ENCODE measurements at regions of chr1 and their contacts with region 1.

Region 1: DNA sequence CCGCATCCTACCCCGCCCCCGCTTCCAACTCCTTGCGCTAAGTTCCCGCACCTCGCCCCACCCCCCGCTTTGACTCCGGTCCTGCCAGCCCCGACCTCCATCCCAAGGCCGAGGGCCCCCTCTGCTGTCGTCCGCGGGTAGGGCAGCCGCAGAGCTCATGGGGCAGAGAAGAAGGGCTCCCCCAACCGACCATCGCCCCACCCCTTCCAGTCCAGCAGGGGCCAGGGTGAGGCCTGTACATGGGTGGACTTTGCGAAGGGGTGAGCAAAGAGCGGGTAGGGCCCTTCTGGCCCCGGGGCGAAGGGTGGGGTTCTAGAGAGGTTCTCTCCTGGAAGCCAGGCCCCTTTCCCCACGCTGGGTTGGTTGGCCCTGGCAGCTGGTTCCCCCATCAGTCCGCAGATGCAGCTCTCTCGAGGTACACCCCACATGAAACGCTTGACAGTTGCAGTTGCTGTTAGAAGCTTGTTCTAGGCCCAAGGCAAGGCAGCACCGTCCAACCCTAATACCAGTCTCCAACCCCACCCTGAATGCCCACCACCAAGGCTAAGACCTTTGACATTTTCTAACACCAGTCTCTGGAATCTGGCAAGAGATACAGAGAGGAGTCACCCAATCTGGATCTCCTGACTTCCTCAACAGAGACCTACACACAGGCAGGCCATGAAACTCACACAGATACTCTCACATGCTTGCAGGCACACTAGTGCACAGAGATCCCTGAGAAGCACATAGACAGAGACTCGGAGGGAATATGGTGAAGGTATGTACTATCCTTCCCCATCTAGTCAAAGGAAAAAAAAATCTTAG is 25.3 kb upstream of the ADGRB2 start:
- DNase-seq: peak; percentile 92 to 95
- H3K4me3 ChIP-seq: peak overlapping the region; percentile 54
- H3K4me3 Mint-ChIP-seq: peak overlapping the region; percentile 74
- H3K27ac Mint-ChIP-seq: peak overlapping the region; percentile 90
- H3K4me1 ChIP-seq: 0 out of 2 replicates have a peak, but pooled peaks cover 7% of the 10 kb centered on the region
- H3K4me1 Mint-ChIP-seq: no peaks in the 10 kb centered on the region
- H3K27me3 ChIP-seq: no peaks in the 10 kb centered on the region
- H3K27me3 Mint-ChIP-seq: no peaks in the 10 kb centered on the region
- CTCF ChIP-seq: peak; percentile 72 to 90

Region 2: DNA sequence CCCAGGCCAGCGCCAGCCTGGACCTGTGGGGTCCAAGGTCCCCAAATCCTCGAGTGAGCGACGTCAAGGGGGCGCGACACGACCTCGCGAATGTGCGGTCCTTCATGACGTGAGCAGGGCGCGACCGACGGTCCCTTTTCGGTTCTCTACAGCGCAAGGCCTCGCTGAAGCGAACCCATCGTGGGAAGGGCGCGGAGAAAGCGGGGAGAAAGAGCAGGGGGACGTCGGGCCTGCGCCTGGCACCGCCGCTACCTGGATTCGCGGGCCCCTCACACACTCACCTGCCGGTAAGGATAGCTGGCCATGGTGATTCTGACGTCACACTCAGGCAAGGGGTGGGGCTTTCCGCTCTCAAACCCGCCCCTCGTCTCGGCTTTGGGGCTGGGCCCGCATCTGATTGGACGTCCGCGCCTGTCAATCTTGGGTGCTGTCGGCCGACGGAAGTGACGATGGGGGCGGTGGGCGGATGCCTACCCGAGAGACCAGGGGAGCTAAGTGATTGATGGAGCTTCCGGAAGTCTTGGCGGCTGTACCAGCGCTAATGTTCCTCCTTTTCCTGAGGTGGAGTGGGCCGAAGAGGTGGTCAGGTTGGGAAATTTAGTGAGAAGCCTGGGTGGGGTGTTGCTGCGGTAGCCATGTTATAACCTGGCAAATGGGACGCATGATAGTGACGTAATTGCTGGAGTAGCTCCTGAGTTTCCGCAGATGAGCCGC is 144.7 kb before region 1 on chr1 and contains the start of gene PEF1:
- CTCF ChIA-PET with region 1: interaction called, 12 read pairs
- POLR2A ChIA-PET with region 1: no interaction called
- intact Hi-C with region 1: no loop called
- DNase-seq: peak; percentile 97
- H3K4me3 ChIP-seq: peak within 1 kb of the TSS; percentile 86
- H3K4me3 Mint-ChIP-seq: peak within 1 kb of the TSS; percentile 100
- H3K27ac Mint-ChIP-seq: peak within 1 kb of the TSS; percentile 100
- H3K4me1 ChIP-seq: 0 out of 2 replicates have a peak, but pooled peaks cover 4% of the 10 kb centered on the region
- H3K4me1 Mint-ChIP-seq: no peaks in the 10 kb centered on the region
- H3K27me3 ChIP-seq: no peaks in the 10 kb centered on the region
- H3K27me3 Mint-ChIP-seq: no peaks in the 10 kb centered on the region
- CTCF ChIP-seq: no peak
- total RNA-seq, gene PEF1: 21.9 and 22.1 TPM in 2 replicates

Region 3: DNA sequence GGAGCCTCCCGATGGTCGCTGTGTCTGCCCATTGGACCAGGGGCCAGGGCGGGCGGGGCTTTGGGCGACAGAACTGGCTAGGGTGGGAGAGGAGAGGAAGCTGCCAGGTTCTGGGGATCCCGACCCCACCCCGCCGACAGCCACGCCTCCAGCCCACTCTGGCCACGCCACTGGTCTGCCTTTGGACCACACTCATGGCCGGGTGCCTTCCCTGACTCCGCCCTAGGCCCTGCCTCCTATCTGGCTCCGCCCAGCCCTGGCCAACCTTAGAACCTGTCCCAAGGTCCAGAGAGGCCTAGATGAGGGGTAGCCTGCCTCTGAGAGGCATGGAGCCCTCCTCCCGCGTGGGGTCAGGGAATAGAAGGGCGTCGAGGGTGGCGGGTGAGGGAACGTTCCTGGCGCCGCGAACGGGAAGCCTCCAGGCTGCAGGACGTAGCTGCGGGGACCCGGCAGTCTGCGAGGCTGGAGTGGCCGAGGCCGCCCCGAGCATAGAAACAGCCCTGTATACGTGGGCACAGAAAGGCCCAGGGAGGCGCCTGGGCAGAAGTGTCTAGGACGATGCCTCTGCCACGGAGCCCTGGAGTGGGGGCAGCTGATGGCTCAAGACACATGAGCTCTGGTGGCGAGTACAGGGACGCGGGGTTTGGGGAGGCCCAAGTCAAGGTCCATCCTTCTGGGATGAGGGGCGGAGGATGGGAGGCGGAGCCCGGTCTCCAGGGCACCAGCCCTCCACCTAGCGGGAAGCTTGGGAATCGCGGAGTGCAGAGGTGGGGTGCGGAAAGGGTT is 74.2 kb before region 1 on chr1:
- CTCF ChIA-PET with region 1: interaction called, 10 read pairs
- POLR2A ChIA-PET with region 1: no interaction called
- intact Hi-C with region 1: loop called (anchors 1 kb)
- DNase-seq: peak; percentile 79 to 90
- H3K4me3 ChIP-seq: peak overlapping the region; percentile 43
- H3K4me3 Mint-ChIP-seq: peak overlapping the region; percentile 89
- H3K27ac Mint-ChIP-seq: peak overlapping the region; percentile 67
- H3K4me1 ChIP-seq: peaks cover 23% of the 10 kb centered on the region
- H3K4me1 Mint-ChIP-seq: peaks cover 11% of the 10 kb centered on the region
- H3K27me3 ChIP-seq: no peaks in the 10 kb centered on the region
- H3K27me3 Mint-ChIP-seq: no peaks in the 10 kb centered on the region
- CTCF ChIP-seq: peak; percentile 60 to 66

Region 4: GRCh38 chr1:31762726-31763670 is 26.5 kb before region 1 on chr1:
- CTCF ChIA-PET with region 1: interaction called, 14 read pairs
- POLR2A ChIA-PET with region 1: interaction called, 3 read pairs
- intact Hi-C with region 1: loop called (anchors 1 kb)
- DNase-seq: peak in 1 of 2 experiments; percentile 72
- H3K4me3 ChIP-seq: peak overlapping the region; percentile 38
- H3K4me3 Mint-ChIP-seq: peak overlapping the region; percentile 84
- H3K27ac Mint-ChIP-seq: no peak overlapping the region
- H3K4me1 ChIP-seq: peaks cover 25% of the 10 kb centered on the region
- H3K4me1 Mint-ChIP-seq: peaks cover 8% of the 10 kb centered on the region
- H3K27me3 ChIP-seq: no peaks in the 10 kb centered on the region
- H3K27me3 Mint-ChIP-seq: peaks cover 6% of the 10 kb centered on the region
- CTCF ChIP-seq: peak; percentile 33 to 37

Region 5: DNA sequence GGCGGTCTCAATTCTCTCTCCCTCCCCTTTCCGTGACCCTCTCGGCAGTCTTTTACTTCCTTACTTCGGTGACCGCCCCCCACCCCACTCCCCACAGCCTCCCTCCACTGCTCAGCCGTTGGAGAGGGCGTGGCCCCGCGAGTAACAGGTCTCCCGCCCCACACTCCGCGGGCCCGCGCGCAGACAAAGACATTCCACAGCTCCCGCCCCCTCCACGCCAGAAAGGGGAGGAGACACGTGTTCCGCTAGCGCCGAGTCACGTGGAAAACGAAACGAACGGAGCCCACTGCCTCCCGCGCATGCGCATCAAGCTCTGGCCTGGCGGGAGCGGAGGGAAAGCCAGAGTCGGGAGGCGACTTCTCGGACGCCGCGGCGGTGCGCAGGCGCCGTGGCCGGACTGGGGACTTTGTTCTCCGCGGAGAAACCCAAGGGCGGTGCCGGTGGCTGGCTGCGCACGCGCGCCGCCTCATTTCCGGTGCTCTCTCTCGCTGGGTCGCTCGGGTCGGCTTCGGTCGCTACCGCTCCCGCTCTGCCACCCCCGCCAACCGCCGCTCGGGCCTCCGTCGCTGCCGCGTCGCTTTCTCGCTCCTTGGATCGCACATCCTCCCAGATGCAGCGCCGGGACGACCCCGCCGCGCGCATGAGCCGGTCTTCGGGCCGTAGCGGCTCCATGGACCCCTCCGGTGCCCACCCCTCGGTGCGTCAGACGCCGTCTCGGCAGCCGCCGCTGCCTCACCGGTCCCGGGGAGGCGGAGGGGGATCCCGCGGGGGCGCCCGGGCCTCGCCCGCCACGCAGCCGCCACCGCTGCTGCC is 224.1 kb after region 1 on chr1 and contains the start of gene KHDRBS1:
- CTCF ChIA-PET with region 1: interaction called, 11 read pairs
- POLR2A ChIA-PET with region 1: interaction called, 3 read pairs
- intact Hi-C with region 1: no loop called
- DNase-seq: peak; percentile 95 to 97
- H3K4me3 ChIP-seq: peak within 1 kb of the TSS; percentile 91
- H3K4me3 Mint-ChIP-seq: peak within 1 kb of the TSS; percentile 96
- H3K27ac Mint-ChIP-seq: peak within 1 kb of the TSS; percentile 98
- H3K4me1 ChIP-seq: no peaks in the 10 kb centered on the region
- H3K4me1 Mint-ChIP-seq: peaks cover 14% of the 10 kb centered on the region
- H3K27me3 ChIP-seq: no peaks in the 10 kb centered on the region
- H3K27me3 Mint-ChIP-seq: no peaks in the 10 kb centered on the region
- CTCF ChIP-seq: no peak
- total RNA-seq, gene KHDRBS1: 131 and 137 TPM in 2 replicates

Measured in Caco-2 (cell line).